Activated naive CD8-positive, alpha-beta T cell treated with anti-CD3 and anti-CD28 coated beads, Interleukin-2, amount 10 ng/mL, durations not matched to agents 7 days and 5 days (primary cell): ENCODE measurements at regions of chr1 and their contacts with region 1.

Region 1: GRCh38 chr1:154386643-154387352 is 18.3 kb upstream of the IL6R start:
- DNase-seq: peak; percentile 56
- ATAC-seq: peak; percentile 92
- H3K4me3 Mint-ChIP-seq: peak overlapping the region; percentile 70
- H3K27ac Mint-ChIP-seq: peak overlapping the region; percentile 92
- H3K4me1 Mint-ChIP-seq: peaks cover 17% of the 10 kb centered on the region
- H3K27me3 Mint-ChIP-seq: no peaks in the 10 kb centered on the region

Region 2: GRCh38 chr1:154353460-154353904 is 33.3 kb before region 1 on chr1:
- POLR2A ChIA-PET with region 1: no interaction called
- DNase-seq: no peak
- ATAC-seq: peak; percentile 49
- H3K4me3 Mint-ChIP-seq: peak overlapping the region; percentile 83
- H3K27ac Mint-ChIP-seq: no peak overlapping the region
- H3K4me1 Mint-ChIP-seq: peaks cover 19% of the 10 kb centered on the region
- H3K27me3 Mint-ChIP-seq: peaks cover 21% of the 10 kb centered on the region

Region 3: DNA sequence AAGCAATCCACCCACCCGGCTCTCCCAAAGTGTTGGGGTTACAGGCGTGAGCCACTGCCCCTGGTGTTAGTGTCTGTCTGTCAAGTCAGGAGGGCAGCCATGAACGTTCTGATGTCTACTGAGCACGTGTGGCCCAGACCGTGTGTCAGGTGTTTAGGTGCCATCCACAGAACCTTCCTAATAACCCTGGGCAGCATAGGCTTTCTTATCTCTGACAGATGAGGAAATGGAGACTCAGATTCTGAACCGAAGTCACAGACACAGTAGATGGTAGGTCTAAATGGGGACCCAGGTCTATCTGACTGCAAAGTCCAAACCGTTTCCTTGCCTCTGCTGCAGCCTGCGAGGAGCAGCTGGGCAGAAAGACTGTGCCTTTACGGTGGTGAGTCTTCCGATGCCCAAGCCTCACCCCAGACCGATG is 17.7 kb after region 1 on chr1:
- POLR2A ChIA-PET with region 1: interaction called, 11 read pairs
- DNase-seq: no peak
- ATAC-seq: no peak
- H3K4me3 Mint-ChIP-seq: peak overlapping the region; percentile 65
- H3K27ac Mint-ChIP-seq: no peak overlapping the region
- H3K4me1 Mint-ChIP-seq: peaks cover 54% of the 10 kb centered on the region
- H3K27me3 Mint-ChIP-seq: peaks cover 24% of the 10 kb centered on the region

Region 4: DNA sequence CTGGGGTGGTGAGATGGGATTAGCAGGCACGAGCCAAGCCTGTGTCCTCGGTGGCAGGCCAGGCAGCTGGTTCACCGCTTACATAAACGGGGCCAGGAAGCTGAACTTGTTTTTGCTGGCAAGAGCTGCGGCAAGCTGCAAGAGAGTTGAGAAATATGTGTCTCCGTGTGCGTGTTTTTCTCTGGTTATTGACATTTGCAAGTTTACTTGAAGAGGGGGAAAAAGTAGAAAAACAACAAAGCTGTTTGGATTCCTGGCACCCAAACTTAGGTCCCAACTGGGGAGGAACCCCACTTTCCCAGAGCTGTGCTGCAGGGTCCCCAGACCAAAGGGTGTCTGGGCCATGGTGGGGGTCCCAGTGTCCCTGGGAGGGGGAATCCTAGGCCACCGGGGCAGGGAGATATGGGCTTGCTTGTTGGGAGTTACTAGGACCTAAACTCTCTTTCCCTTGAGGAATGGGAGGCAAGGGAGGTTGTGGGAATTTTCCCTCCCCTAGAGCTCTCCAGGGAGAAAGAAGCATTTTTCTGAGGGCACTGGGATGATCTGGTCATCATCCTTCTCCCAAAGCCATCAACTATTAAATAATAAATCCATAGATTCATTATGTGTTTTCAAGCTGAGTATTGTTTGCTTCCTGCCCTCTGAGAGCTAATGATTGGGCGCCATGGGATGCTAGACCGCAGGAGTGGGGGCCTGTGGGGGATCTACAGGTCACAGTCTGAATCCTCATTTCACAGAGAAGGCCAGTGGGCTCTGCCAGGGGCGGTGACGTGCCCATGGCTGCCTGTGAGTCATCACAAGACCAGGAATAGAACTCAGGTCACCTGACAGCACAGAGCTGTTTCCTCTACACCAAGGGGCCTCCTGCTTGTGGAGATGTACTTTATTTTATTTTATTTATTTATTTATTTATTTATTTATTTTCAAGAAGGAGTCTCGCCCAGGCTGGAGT is 33.1 kb after region 1 on chr1:
- POLR2A ChIA-PET with region 1: interaction called, 16 read pairs
- DNase-seq: no peak
- ATAC-seq: peak; percentile 83
- H3K4me3 Mint-ChIP-seq: peak overlapping the region; percentile 15
- H3K27ac Mint-ChIP-seq: peak overlapping the region; percentile 73
- H3K4me1 Mint-ChIP-seq: peaks cover 16% of the 10 kb centered on the region
- H3K27me3 Mint-ChIP-seq: peaks cover 7% of the 10 kb centered on the region